HepG2 (cell line): ENCODE measurements at regions of chr14 and their contacts with region 1.

Region 1: GRCh38 chr14:23694085-23694975 is 58.2 kb downstream of the DHRS2 start:
- DNase-seq: peak; percentile 70
- ATAC-seq: peak; percentile 76
- H3K4me3 ChIP-seq: peak overlapping the region; percentile 14 to 43 (median 25); a peak in 5 of 6 replicates
- H3K27ac ChIP-seq: peak overlapping the region; percentile 37
- H3K4me1 ChIP-seq: peaks cover 65% of the 10 kb centered on the region
- H3K27me3 ChIP-seq: no peaks in the 10 kb centered on the region
- CTCF ChIP-seq: no peak
- EP300 ChIP-seq: peak; percentile 34 to 76; a peak in 3 of 4 replicates
- POLR2A ChIP-seq: no peak
- RAD21 ChIP-seq: no peak

Region 2: GRCh38 chr14:23681337-23681736 is 13.0 kb before region 1 on chr14:
- CTCF ChIA-PET with region 1: no interaction called
- POLR2A ChIA-PET with region 1: interaction called, 10 read pairs
- in situ Hi-C with region 1: no loop called
- intact Hi-C with region 1: no loop called
- DNase-seq: no peak
- ATAC-seq: no peak
- H3K4me3 ChIP-seq: no peak overlapping the region
- H3K27ac ChIP-seq: no peak overlapping the region
- H3K4me1 ChIP-seq: no peaks in the 10 kb centered on the region
- H3K27me3 ChIP-seq: peaks cover 1 to 4% of the 10 kb centered on the region in 2 experiments; a peak in 1 of 5 replicates
- CTCF ChIP-seq: no peak
- EP300 ChIP-seq: no peak
- POLR2A ChIP-seq: no peak
- RAD21 ChIP-seq: no peak

Region 3: DNA sequence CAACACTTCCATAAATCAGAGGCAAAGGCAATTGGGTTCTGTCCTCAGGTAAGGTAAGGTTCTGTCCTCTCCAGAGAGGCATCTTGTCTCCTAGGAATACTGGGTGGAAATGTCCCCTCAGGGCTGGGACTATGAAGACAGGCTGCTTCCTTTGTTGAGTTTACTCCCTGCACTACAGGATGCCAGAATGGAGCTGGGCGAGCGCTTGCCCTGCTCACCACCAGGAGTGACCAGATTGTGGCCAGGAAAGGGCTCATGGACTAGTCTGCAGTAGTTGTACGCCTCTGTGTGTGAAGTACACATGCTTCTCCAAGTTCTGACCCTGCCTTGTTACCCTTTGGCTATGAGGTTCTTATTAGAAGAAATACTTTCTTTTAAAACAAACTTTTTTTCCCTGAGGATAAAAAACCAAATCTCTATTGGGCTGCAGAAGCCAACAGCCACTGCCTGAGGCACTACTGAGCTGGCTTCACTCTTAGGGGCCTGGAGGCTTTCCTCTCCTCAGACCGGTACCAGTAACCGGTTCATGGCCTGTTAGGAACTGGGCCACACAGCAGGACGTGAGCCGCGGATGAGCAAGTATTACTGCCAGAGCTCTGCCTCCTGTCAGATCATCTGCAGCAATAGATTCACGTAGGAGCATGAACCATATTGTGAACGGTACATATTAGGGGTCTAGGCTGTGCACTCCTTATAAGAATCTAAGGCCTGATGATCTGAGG is 25.1 kb after region 1 on chr14:
- CTCF ChIA-PET with region 1: no interaction called
- POLR2A ChIA-PET with region 1: no interaction called
- in situ Hi-C with region 1: no loop called
- intact Hi-C with region 1: no loop called
- DNase-seq: no peak
- ATAC-seq: peak; percentile 90
- H3K4me3 ChIP-seq: no peak overlapping the region
- H3K27ac ChIP-seq: no peak overlapping the region
- H3K4me1 ChIP-seq: no peaks in the 10 kb centered on the region
- H3K27me3 ChIP-seq: peaks cover 0 to 11% of the 10 kb centered on the region in 2 experiments; a peak in 1 of 5 replicates
- CTCF ChIP-seq: no peak
- EP300 ChIP-seq: no peak
- POLR2A ChIP-seq: no peak
- RAD21 ChIP-seq: no peak

Region 4: DNA sequence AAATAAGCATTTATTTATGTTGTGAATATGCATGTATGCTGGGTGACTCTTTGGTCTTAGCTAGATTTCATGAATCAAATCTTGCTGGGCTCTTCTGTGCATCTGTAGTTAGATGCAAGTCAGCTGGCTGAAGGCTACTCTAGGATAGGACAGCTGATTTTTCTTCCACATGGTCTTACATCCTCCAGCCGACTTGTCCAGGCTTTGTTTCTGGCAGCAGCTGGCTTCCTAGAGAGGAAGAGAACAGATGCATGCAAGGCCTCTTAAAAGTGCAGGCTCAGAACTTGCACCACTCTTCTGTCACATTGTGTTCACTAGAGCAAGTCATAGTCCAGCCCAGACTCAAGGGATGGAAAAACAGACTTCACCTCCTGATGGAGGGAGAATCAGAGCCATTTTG is 1791.1 kb after region 1 on chr14:
- CTCF ChIA-PET with region 1: no interaction called
- POLR2A ChIA-PET with region 1: no interaction called
- in situ Hi-C with region 1: no loop called
- intact Hi-C with region 1: loop called (anchors 10 kb)
- DNase-seq: no peak
- ATAC-seq: no peak
- H3K4me3 ChIP-seq: no peak overlapping the region
- H3K27ac ChIP-seq: no peak overlapping the region
- H3K4me1 ChIP-seq: no peaks in the 10 kb centered on the region
- H3K27me3 ChIP-seq: no peaks in the 10 kb centered on the region
- CTCF ChIP-seq: no peak
- EP300 ChIP-seq: no peak
- POLR2A ChIP-seq: no peak
- RAD21 ChIP-seq: no peak